Activated CD4-positive, alpha-beta T cell treated with anti-CD3 and anti-CD28 coated beads, Interleukin-2, amount 10 ng/mL, durations not matched to agents 24 days and 14 days (primary cell): ENCODE measurements at regions of chr1 and their contacts with region 1.

Region 1: GRCh38 chr1:119987112-119987511 is 82.3 kb downstream of the NOTCH2 start:
- DNase-seq: no peak
- H3K4me3 Mint-ChIP-seq: peak overlapping the region; percentile 24
- H3K27ac Mint-ChIP-seq: peak overlapping the region; percentile 58
- H3K4me1 Mint-ChIP-seq: peaks cover 43% of the 10 kb centered on the region
- H3K27me3 Mint-ChIP-seq: no peaks in the 10 kb centered on the region

Region 2: DNA sequence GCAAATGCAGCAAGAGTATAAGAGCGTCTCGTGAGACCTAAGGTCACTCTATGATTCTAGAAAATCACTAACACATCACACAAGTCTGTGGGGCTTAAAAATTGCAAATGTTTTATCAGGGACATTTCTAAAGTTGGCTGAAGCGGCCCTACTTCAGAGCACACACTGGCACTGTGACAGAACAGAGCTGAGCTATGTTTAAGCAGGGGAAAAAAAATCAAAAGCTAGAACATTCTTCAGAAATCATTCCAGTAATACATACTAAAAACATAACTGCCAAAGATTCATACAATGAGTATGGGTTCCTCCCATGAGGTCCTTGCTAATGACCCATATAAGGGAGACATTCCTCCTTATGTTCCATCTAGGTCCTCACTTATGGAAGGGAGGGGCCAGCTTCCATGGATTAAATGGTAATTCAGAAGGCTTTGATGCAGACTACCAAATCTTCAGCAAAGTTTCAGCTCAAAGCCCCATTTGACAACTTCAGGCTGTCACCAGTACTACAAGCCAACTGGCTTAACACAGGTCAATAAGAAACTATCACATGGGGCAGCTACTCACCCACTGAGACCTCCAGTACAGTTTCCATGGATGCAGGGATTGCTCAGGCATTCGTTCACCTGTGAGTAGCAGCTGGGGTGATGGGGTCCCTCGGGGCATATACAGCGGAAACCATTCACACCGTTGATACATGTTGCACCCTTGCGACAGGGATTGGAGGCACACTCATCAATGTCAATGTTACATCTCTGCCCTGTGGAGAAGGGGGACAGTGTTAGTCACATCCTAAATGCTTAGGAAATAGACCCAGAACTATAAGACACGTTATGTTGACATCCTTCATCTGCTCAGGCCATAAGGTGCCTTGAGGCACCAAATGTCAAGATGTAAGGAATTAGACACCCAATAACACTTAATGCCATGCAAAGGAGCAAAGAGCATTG is 32.4 kb before region 1 on chr1:
- intact Hi-C with region 1: loop called (anchors 5 kb)
- DNase-seq: peak; percentile 51
- H3K4me3 Mint-ChIP-seq: no peak overlapping the region
- H3K27ac Mint-ChIP-seq: no peak overlapping the region
- H3K4me1 Mint-ChIP-seq: peaks cover 16% of the 10 kb centered on the region
- H3K27me3 Mint-ChIP-seq: no peaks in the 10 kb centered on the region